ENCODE measurements at regions of chr6 and their contacts with region 1.

Region 1: DNA sequence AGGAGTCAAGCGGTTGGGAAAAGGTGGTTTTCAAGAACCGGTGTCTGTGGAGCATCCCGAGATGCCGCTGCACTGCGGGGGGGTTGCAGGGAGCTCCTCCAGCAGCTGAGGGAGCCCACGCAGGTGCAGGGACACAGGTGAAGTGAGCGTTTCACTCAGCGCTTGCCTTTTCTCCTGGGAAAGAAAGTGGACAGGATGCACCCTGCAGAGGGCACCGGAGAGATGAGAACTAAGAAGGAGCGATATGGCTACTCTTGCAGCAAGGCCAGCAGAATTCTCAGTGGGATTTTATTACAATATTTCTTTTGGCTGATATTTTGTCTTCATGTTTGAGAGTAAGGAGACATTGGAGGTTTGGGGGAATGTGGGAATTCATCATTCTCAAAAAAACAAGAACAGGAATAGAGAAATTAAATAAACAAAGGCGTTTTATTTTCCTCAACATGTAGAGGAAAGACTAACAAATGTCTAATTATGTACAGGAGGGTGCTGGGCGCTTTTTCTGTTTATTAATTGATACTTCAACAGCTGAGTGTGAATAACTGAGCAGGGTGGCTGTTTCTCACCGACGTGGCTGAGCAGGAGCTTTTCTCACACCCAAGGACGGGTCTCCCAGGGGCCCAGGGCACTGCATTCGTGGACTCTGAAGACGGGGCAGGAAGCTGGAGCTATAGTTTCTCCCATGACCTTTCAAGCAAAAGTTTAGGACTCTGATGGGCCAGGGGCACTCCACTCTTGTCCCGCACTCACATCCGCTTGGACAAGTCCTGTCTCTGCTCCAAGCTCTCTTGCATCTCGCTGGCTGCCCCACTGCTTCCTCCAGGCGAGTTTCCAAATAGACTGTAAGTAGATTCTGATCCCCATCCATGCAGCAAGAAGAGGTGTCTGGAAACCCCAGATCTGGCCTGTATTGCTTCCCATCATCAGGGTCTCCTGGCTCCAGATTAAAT is 176.1 kb downstream of the SMOC2 start:
- DNase-seq: peak; percentile 27
- H3K4me3 Mint-ChIP-seq: no peak overlapping the region
- H3K27ac Mint-ChIP-seq: no peak overlapping the region
- H3K4me1 Mint-ChIP-seq: no peaks in the 10 kb centered on the region
- H3K27me3 Mint-ChIP-seq: no peaks in the 10 kb centered on the region
- CTCF ChIP-seq: peak; percentile 44

Region 2: DNA sequence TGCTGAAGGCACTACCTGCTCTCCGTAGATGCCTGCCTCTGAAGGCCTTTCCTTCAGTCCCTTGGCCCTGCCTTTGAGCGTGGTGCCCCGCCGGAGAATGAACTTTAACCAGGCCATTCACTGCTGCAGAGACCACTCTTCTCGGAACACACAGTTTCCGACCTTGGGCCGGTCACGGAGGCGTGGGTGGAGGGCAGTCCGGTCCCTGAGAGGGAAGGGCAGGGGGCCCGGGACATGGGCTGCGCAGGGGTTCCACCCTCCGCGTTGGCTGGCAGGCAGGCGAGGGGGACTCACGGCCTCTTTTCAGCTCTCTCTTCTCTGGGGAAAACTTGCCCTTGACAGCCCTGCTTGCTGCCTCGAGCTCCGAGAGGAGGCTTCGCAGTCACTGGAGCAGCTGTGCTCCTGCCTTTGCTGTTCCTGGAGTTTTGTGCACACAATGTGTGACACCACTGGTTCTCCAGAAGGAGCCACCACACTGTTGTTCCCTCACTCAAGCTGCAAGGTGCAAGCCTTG is 11.7 kb after region 1 on chr6:
- CTCF ChIA-PET with region 1: no interaction called
- POLR2A ChIA-PET with region 1: no interaction called
- intact Hi-C with region 1: no loop called
- DNase-seq: no peak
- H3K4me3 Mint-ChIP-seq: no peak overlapping the region
- H3K27ac Mint-ChIP-seq: no peak overlapping the region
- H3K4me1 Mint-ChIP-seq: no peaks in the 10 kb centered on the region
- H3K27me3 Mint-ChIP-seq: no peaks in the 10 kb centered on the region
- CTCF ChIP-seq: no peak

Region 3: GRCh38 chr6:168713834-168714233 is 96.7 kb after region 1 on chr6:
- CTCF ChIA-PET with region 1: no interaction called
- POLR2A ChIA-PET with region 1: no interaction called
- intact Hi-C with region 1: loop called (anchors 2 kb)
- DNase-seq: peak; percentile 43
- H3K4me3 Mint-ChIP-seq: no peak overlapping the region
- H3K27ac Mint-ChIP-seq: no peak overlapping the region
- H3K4me1 Mint-ChIP-seq: no peaks in the 10 kb centered on the region
- H3K27me3 Mint-ChIP-seq: peaks cover 30% of the 10 kb centered on the region
- CTCF ChIP-seq: peak; percentile 46

Region 4: DNA sequence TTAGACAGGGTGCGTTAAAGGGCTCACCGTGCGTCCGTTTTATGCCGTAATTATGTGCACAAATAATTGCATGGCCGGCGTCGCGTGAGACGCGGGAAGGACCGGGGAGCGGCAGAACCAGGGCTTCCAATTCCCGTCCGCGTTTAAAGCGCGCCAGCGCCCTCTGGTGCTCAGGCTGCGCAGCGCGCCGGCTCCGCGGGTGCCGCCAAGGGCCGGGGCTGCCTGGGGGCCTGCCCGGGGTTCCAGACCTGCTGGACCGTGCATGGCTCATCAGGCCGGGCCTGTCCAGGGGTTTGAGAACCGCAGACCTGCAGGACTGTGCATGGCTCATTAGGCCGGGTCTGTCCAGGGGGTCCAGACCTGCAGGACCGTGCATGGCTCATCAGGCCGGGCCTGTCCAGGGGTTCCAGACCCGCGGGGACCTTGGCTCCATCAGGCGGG is 267.6 kb after region 1 on chr6:
- CTCF ChIA-PET with region 1: interaction called, 4 read pairs
- POLR2A ChIA-PET with region 1: no interaction called
- intact Hi-C with region 1: loop called (anchors 1 kb)
- DNase-seq: peak; percentile 46
- H3K4me3 Mint-ChIP-seq: no peak overlapping the region
- H3K27ac Mint-ChIP-seq: no peak overlapping the region
- H3K4me1 Mint-ChIP-seq: no peaks in the 10 kb centered on the region
- H3K27me3 Mint-ChIP-seq: peaks cover 74% of the 10 kb centered on the region
- CTCF ChIP-seq: peak; percentile 97

Region 5: DNA sequence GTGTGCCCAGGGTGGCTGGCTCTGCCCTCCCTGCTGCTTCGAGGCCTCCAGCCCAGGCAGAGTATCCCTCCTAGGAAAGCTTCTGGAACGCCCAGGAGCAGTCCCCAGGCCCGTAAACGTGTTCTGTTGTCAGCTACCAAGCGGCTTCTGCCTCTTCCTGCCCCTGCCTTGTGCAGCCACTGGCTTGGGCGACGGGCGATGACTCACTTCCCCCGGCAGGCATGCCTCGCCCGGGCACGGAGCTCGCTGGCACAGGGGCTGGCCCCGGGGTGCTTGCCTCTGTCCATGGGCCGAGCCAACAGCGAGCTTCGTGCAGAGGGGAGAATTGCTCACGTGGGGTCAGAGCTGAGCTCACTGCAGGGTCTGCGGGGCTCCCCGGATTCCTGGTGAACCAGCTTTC is 723.3 kb after region 1 on chr6:
- CTCF ChIA-PET with region 1: no interaction called
- POLR2A ChIA-PET with region 1: no interaction called
- intact Hi-C with region 1: no loop called
- DNase-seq: peak; percentile 90
- H3K4me3 Mint-ChIP-seq: peak overlapping the region; percentile 14
- H3K27ac Mint-ChIP-seq: peak overlapping the region; percentile 57
- H3K4me1 Mint-ChIP-seq: peaks cover 51% of the 10 kb centered on the region
- H3K27me3 Mint-ChIP-seq: no peaks in the 10 kb centered on the region
- CTCF ChIP-seq: no peak